Left colon (tissue), 2 donors: ENCODE measurements at regions of chr22 and their contacts with region 1.

Region 1: DNA sequence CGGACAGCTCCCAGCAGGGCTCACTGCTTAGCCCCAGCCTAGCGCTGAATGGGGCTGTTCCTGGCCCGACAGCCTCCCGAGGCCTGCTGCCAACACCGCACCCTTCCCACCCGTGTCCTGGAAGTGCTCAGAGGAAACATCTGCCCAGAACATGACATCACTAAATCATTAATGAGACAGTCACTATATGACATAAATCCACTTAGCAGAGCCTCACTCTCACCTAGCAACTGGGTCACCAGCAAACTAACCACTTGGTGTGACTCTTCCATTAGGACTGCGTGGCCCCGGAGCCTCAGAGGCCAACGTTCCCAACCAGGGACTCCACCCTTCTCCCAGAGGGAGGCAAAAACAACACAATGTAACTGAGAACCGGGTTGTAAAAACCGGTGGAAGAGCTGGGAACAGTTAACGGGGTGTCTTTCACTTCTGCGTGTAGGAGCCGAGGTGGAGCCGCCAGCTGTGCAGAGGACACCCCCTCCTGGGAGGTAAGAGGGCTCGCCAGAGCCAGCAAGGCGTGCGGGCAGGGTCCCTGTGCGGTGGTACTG is 21.4 kb upstream of the PACSIN2 start:
- DNase-seq: peak in 1 of 2 donors; percentile 35
- ATAC-seq: peak; percentile 43

Region 2: DNA sequence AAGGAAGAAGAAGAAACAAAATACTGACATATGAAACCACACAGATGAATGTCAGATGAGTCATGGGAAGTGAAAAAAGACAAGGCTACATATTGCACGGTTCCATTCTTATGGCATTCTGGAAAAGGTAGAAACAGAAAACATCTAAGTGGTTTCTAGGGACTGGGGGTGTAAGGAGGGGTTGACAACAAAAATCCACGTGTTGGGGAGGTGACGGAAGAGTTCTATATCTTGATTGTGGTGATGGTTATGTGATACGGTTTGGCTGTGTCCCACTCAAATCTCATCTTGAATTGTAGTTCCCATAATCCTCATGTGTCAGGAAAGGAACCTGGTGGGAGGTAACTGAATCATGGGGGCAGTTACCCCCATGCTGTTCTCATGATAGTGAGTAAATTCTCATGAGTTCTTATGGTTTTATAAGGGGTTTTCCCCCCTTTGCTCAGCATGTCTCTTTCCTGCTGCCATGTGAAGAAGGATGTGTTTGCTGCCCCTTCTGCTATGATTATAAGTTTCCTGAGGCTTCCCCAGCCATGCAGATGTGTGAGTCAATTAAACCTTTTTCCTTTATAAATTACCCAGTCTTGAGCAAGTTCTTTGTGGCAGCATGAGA is 172.9 kb before region 1 on chr22:
- intact Hi-C with region 1: loop called in 1 of 2 experiments (anchors 10 kb)
- DNase-seq: no peak
- ATAC-seq: no peak

Region 3: DNA sequence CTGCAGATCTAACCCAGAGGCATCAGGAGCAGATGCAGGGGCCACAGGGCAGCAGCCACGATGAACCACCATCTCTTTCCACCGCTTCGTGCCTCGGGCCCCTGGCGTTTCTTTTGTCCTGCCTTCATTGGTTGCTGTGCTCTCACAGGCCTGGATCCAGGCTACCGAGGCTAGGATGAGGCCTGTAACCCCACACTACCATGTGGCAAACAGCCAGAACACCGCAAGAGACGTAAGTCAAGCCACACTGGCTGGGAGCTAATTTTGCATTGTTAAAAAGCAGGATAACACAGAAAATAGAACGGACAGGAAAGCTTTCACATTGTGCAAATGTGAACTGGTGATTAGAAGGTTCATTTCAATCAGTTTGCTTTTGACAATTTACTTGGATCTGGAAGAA is 163.5 kb before region 1 on chr22:
- intact Hi-C with region 1: loop called (anchors 10 kb)
- DNase-seq: no peak
- ATAC-seq: no peak